K562 (cell line): ENCODE measurements at regions of chr1 and their contacts with region 1.

Region 1: GRCh38 chr1:45410850-45411314 is 70.6 kb upstream of the MUTYH start:
- DNase-seq: peak in 1 of 4 experiments; percentile 66
- ATAC-seq: peak; percentile 53
- H3K4me3 ChIP-seq: no peak overlapping the region
- H3K27ac ChIP-seq: 0 out of 3 replicates have a peak overlapping the region, but pooled peaks have one; percentile 20
- H3K4me1 ChIP-seq: peaks cover 4 to 19% of the 10 kb centered on the region in 2 experiments; a peak in 4 of 5 replicates
- H3K27me3 ChIP-seq: no peaks in the 10 kb centered on the region
- CTCF ChIP-seq: no peak
- EP300 ChIP-seq: peak; percentile 78; the same call in 1 of the 2 replicates
- POLR2A ChIP-seq: no peak
- RAD21 ChIP-seq: 0 out of 4 replicates have a peak, but pooled peaks of 1 of the 2 experiments have one; percentile 13

Region 2: GRCh38 chr1:45093334-45093733 is 317.5 kb before region 1 on chr1:
- CTCF ChIA-PET with region 1: no interaction called
- POLR2A ChIA-PET with region 1: no interaction called
- in situ Hi-C with region 1: no loop called
- intact Hi-C with region 1: no loop called
- DNase-seq: no peak
- ATAC-seq: no peak
- H3K4me3 ChIP-seq: no peak overlapping the region
- H3K27ac ChIP-seq: no peak overlapping the region
- H3K4me1 ChIP-seq: no peaks in the 10 kb centered on the region
- H3K27me3 ChIP-seq: peaks cover 6 to 11% of the 10 kb centered on the region in 2 experiments; a peak in 2 of 5 replicates
- CTCF ChIP-seq: no peak
- EP300 ChIP-seq: no peak
- POLR2A ChIP-seq: no peak
- RAD21 ChIP-seq: no peak

Region 3: DNA sequence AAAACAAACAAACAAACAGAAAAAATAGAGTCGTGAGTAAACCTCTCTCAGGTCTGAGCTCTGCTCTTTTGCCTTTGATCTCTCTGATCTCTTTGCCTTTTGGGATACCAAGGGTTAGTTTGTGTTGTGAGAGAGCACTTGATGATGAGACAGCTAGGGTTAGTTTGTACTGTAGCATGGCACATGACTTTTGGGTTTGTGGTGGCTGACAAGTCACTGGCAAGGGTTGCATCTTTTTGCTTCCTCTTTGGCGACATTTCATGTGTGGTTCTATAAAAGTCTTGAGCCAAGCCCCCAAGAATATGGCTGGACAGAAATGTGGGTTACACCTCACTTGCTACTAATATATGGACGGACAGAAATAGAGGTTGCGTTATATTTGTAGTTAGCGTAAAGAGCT is 19.6 kb after region 1 on chr1:
- CTCF ChIA-PET with region 1: no interaction called
- POLR2A ChIA-PET with region 1: interaction called, 10 read pairs
- in situ Hi-C with region 1: no loop called
- intact Hi-C with region 1: no loop called
- DNase-seq: no peak
- ATAC-seq: no peak
- H3K4me3 ChIP-seq: no peak overlapping the region
- H3K27ac ChIP-seq: no peak overlapping the region
- H3K4me1 ChIP-seq: peaks cover 5 to 12% of the 10 kb centered on the region in 2 experiments; a peak in 4 of 5 replicates
- H3K27me3 ChIP-seq: no peaks in the 10 kb centered on the region
- CTCF ChIP-seq: no peak
- EP300 ChIP-seq: no peak
- POLR2A ChIP-seq: no peak
- RAD21 ChIP-seq: no peak